Activated naive CD4-positive, alpha-beta T cell treated with anti-CD3 and anti-CD28 coated beads, Interleukin-2, amount 10 ng/mL, durations not matched to agents 7 days and 5 days (primary cell): ENCODE measurements at regions of chr1 and their contacts with region 1.

Region 1: GRCh38 chr1:235077571-235078479 is 50.8 kb downstream of the TOMM20 start:
- DNase-seq: no peak
- H3K4me3 Mint-ChIP-seq: no peak overlapping the region
- H3K27ac Mint-ChIP-seq: no peak overlapping the region
- H3K4me1 Mint-ChIP-seq: peaks cover 31% of the 10 kb centered on the region
- H3K27me3 Mint-ChIP-seq: no peaks in the 10 kb centered on the region

Region 2: DNA sequence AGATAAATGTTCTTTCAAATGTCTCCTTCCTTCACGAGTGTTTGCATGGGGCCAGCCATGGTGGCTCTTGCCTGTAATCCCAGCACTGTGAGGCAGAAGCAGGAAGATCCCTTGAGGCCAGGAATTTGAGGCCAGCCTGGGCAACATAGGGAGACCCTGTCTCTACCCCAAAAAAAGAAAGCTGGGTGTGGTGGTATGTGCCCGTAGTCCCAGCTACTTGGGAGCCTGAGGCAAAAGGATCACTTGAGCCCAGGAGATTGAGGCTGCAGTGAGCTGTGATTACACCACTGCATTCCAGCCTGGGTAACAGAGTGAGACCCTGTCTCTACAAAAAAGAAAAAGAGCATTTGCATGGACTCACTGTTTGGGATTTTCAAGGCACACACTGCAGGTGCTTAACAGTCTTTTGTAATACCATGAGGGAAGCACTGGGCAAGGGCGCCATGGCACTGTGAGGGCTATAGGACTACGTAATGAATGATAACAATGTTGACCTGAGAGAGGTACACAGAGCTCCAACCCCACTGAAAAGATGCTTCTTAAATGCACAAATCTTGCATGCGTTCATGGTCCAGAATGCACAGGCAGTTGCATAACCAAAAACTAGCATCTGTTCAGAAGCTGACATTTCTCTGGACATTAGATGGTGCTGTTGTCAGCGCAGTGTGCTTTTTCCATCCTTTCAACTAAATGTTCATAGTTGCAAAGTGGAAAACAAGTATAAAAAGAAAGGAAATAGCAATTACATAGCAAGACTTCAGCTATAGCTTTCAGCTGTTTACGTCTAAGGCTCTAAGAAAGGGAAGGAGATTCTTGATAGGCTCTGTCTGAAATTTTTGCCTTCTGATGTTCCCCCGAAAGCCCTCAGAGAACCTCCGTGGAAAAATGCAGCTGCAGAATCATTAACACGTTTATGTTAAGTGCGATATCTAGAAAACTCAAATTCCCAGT is 591.1 kb before region 1 on chr1:
- CTCF ChIA-PET with region 1: interaction called, 17 read pairs
- DNase-seq: peak; percentile 60
- H3K4me3 Mint-ChIP-seq: no peak overlapping the region
- H3K27ac Mint-ChIP-seq: peak overlapping the region; percentile 70
- H3K4me1 Mint-ChIP-seq: peaks cover 35% of the 10 kb centered on the region
- H3K27me3 Mint-ChIP-seq: peaks cover 29% of the 10 kb centered on the region

Region 3: DNA sequence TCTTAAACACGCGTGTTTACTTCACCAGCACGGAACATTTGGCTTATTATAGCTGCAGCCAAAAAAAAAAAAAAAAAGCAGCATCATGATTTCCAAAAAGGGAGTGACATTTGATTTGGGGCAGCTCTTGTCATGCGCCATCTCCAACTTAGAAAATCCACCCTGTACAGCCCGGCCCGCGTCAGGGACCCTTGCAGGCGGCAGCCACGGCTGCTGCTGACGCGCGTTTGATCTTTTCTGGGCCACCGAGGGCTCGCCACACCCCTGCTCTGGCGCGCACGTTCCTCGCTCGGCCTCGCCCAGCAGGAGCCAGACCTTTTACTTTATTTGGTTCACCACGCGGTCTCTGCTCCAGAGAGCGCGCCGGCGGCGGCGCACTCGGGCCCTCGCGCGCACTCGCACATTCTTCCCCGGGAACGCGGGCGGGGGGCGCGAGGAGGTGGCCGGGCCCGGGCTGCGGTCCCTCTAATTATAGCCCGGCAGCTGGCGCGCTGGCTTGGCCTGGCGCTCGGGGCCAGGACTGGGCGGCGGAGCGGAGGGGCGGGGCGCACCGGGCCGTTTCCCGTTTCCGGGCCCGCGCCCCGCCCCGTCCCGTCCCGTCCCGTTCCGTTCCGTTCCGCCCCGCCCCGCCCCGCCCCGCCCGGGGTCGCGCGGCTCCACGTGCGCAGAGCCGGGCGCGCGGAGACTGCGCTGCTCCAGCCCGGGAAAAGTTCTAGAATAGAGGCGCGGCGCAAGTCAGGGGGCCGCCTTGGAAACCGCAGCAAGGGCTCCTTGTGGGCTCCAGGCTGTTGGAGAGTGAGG is 478.0 kb before region 1 on chr1:
- CTCF ChIA-PET with region 1: interaction called, 20 read pairs
- DNase-seq: peak; percentile 81
- H3K4me3 Mint-ChIP-seq: peak overlapping the region; percentile 82
- H3K27ac Mint-ChIP-seq: peak overlapping the region; percentile 98
- H3K4me1 Mint-ChIP-seq: peaks cover 63% of the 10 kb centered on the region
- H3K27me3 Mint-ChIP-seq: no peaks in the 10 kb centered on the region

Region 4: DNA sequence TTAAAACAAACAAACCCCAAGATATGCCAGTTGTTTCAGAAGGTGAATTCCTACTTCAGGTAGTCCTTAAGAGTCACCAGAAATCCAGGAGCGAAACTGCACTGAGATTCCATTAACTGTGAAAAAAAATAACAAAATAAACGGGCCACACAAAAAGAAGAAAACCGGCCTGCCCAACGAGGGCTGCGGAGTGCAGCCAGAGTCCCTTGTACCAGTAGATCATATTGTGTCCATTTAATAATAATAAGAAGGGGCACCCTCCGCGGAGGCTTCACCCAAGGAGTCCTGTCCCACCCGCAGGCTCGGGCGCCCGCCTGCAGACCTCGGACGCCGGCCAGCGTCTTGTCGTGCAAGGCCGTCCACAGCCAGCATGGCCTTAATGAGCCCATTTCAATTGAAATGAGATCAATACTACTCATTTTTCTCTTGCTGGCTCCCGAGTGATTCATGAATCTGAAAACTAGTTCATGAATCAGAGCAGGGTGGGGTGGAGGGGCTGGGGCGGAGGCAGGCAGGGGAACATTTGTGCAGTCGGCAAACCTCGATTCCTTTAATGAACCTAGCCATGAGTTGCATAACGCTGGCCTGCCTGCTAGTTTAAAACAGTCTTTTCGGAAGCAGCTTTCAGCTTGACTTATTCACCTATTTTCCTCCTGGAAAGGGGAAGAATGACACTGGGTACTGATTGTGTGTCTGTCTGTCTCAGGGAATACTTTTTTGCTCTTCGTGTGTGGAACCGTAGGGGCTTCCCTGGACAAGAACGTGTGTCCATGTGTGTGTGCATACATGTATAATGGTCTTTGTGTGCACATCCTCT is 354.7 kb before region 1 on chr1:
- CTCF ChIA-PET with region 1: interaction called, 12 read pairs
- DNase-seq: peak; percentile 55
- H3K4me3 Mint-ChIP-seq: peak overlapping the region; percentile 59
- H3K27ac Mint-ChIP-seq: peak overlapping the region; percentile 96
- H3K4me1 Mint-ChIP-seq: peaks cover 66% of the 10 kb centered on the region
- H3K27me3 Mint-ChIP-seq: peaks cover 13% of the 10 kb centered on the region

Region 5: GRCh38 chr1:234851450-234852438 is 226.1 kb before region 1 on chr1:
- CTCF ChIA-PET with region 1: no interaction called
- DNase-seq: no peak
- H3K4me3 Mint-ChIP-seq: no peak overlapping the region
- H3K27ac Mint-ChIP-seq: no peak overlapping the region
- H3K4me1 Mint-ChIP-seq: peaks cover 48% of the 10 kb centered on the region
- H3K27me3 Mint-ChIP-seq: peaks cover 4% of the 10 kb centered on the region

Region 6: DNA sequence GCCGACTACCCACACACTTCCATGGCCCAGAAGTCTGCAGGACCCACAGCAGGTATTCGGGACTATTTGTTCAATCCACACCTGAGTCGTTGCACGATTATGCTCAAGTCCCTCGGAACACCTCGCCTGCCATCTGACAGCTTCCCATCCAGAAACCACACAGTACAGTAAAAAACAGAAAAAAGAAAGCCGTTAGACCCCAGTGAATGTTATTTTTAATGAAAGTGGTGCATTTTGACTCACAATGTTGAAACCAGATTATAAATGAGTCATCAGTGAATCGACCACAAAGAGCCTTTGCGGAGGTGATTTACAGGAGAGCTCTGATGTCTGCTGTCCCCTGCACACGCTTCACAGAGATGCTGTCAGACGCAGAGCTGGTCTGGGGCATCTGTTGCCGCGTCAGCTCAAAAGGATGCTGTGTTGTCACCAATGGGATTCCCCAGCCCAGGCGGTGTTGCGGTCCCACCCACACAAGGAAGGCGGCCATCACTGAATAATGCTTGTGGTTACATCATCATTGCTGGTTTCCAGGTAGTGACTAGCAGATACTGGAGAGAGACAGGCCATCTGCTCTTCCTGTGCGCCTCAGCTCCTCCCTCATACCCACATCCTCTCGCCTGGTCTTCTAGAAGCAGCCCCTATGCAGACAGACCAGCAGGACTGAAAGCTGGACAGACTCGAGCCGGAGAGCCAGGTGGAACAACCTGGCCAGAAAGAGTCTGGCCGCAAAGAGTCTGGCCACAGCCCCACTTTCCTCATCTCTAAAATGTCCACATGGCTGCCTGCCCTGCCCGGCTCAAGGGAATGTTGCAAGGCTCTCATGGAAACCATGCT is 66.0 kb before region 1 on chr1:
- CTCF ChIA-PET with region 1: interaction called, 30 read pairs
- DNase-seq: peak; percentile 97
- H3K4me3 Mint-ChIP-seq: peak overlapping the region; percentile 51
- H3K27ac Mint-ChIP-seq: peak overlapping the region; percentile 92
- H3K4me1 Mint-ChIP-seq: peaks cover 89% of the 10 kb centered on the region
- H3K27me3 Mint-ChIP-seq: no peaks in the 10 kb centered on the region

Region 7: GRCh38 chr1:235128456-235129328 is 50.9 kb after region 1 on chr1 and contains the start of gene TOMM20:
- CTCF ChIA-PET with region 1: no interaction called
- DNase-seq: peak; percentile 96
- H3K4me3 Mint-ChIP-seq: peak within 1 kb of the TSS; percentile 99
- H3K27ac Mint-ChIP-seq: peak within 1 kb of the TSS; percentile 98
- H3K4me1 Mint-ChIP-seq: peaks cover 46% of the 10 kb centered on the region
- H3K27me3 Mint-ChIP-seq: no peaks in the 10 kb centered on the region